Activated B cell treated with CpG ODN at 0.5 μM for 24 hours (primary cell): ENCODE measurements at regions of chr11 and their contacts with region 1.

Region 1: DNA sequence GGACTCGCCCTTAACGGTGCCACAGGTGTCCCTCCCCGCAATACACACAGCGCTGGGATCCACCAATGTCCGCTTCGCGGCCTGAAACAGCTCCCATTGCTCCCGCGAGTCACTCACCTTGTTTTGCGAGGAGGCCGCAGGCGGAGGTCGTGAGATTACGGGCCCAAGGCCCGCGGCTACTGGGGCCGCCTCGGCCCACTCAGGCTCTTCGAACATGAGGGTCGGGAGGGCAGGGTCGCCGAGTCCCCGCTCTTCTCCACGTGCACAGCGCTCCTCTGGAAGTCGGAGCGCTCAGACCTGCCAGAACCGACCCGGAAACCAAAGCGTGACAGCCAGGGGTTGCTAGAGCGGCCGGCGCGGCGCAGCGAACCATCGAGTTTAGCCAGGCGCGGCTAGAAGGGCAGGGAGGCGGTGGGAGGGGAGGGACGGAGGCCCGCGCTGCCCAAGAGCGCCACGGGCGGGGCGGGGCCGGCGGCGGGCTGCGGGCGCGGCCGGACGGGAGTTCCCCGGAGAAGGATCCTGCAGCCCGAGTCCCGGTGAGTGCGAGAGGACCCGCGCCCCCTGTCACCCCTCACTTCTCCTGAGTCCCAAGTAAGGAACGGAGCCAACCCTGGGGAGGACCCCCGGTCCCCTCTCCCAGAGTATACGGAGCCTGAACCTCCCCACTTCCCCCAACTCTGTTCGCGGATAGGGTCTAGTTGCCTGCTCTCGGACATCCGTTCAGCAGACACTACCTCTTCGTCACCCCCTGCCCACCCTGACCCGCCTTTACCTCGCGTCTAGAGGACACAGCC is at the starts of genes ILK and RRP8:
- DNase-seq: peak; percentile 78
- ATAC-seq: peak; percentile 88
- H3K4me3 Mint-ChIP-seq: no peak within 1 kb of the TSS
- H3K27ac Mint-ChIP-seq: no peak within 1 kb of the TSS
- H3K4me1 Mint-ChIP-seq: peaks cover 10% of the 10 kb centered on the region
- H3K27me3 Mint-ChIP-seq: no peaks in the 10 kb centered on the region
- CTCF ChIP-seq: no peak
- total RNA-seq, gene ILK: 113 and 128 TPM in 2 replicates
- total RNA-seq, gene RRP8: 29.1 and 30.5 TPM in 2 replicates

Region 2: GRCh38 chr11:6234387-6235107 is 368.9 kb before region 1 on chr11 and contains the start of gene FHIP1B:
- CTCF ChIA-PET with region 1: no interaction called
- POLR2A ChIA-PET with region 1: no interaction called
- intact Hi-C with region 1: loop called (anchors 1 kb)
- DNase-seq: peak; percentile 95
- ATAC-seq: peak; percentile 93
- H3K4me3 Mint-ChIP-seq: peak within 1 kb of the TSS; percentile 99
- H3K27ac Mint-ChIP-seq: peak within 1 kb of the TSS; percentile 92
- H3K4me1 Mint-ChIP-seq: peaks cover 32% of the 10 kb centered on the region
- H3K27me3 Mint-ChIP-seq: peaks cover 3% of the 10 kb centered on the region
- CTCF ChIP-seq: no peak
- total RNA-seq, gene FHIP1B: 27.7 and 32.8 TPM in 2 replicates

Region 3: DNA sequence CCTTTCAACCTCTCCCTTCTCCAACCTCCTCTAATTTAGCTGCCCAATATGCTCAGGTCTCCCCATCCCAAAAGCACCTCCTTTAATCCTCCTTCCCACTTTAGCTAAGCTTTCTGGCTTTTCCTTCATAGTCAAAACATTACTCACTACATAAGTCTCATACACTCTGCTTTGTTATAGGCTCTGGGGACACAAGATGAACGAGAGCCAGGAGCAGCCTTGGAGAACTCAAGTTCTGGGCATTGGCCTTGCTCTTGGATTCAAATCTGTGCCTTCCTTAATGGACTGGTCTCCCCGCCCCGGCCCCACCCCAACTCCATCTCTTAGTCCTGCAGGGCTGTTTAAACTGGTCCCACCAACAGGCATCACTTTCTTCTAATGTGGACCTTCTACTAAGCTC is 151.3 kb before region 1 on chr11:
- CTCF ChIA-PET with region 1: no interaction called
- POLR2A ChIA-PET with region 1: no interaction called
- intact Hi-C with region 1: no loop called
- DNase-seq: no peak
- ATAC-seq: no peak
- H3K4me3 Mint-ChIP-seq: no peak overlapping the region
- H3K27ac Mint-ChIP-seq: no peak overlapping the region
- H3K4me1 Mint-ChIP-seq: no peaks in the 10 kb centered on the region
- H3K27me3 Mint-ChIP-seq: no peaks in the 10 kb centered on the region
- CTCF ChIP-seq: no peak

Region 4: GRCh38 chr11:6531267-6531752 is 72.2 kb before region 1 on chr11:
- CTCF ChIA-PET with region 1: interaction called, 4 read pairs
- POLR2A ChIA-PET with region 1: interaction called, 5 read pairs
- intact Hi-C with region 1: loop called (anchors 5 kb)
- DNase-seq: no peak
- ATAC-seq: peak; percentile 60
- H3K4me3 Mint-ChIP-seq: no peak overlapping the region
- H3K27ac Mint-ChIP-seq: no peak overlapping the region
- H3K4me1 Mint-ChIP-seq: peaks cover 6% of the 10 kb centered on the region
- H3K27me3 Mint-ChIP-seq: no peaks in the 10 kb centered on the region
- CTCF ChIP-seq: peak; percentile 35

Region 5: DNA sequence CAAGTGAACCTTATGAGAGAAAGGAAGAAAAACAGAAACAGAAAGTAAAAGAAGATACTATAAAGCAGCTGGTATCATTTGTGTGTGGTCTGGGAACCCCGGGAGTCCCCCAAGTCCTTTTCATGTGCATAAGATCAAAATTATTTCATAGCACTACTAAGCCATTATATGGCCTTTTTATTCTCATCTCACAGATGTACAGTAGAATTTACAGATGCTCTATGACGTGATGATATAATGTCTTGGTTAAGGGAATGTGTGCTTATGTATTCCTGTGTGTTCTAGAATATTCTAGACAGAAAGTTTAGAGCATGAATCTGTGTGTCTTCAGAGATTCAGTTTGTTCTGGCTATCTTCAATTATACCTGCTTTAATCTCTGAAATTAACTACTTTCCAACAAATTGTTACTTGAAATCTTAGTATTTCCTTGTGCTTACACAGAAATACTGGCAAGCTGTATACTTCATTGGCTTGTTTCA is 24.3 kb after region 1 on chr11:
- CTCF ChIA-PET with region 1: no interaction called
- POLR2A ChIA-PET with region 1: no interaction called
- intact Hi-C with region 1: loop called (anchors 2 kb)
- DNase-seq: no peak
- ATAC-seq: peak; percentile 67
- H3K4me3 Mint-ChIP-seq: no peak overlapping the region
- H3K27ac Mint-ChIP-seq: peak overlapping the region; percentile 24
- H3K4me1 Mint-ChIP-seq: peaks cover 20% of the 10 kb centered on the region
- H3K27me3 Mint-ChIP-seq: no peaks in the 10 kb centered on the region
- CTCF ChIP-seq: no peak

Region 6: GRCh38 chr11:6705905-6706535 is 102.5 kb after region 1 on chr11:
- CTCF ChIA-PET with region 1: interaction called, 4 read pairs
- POLR2A ChIA-PET with region 1: no interaction called
- intact Hi-C with region 1: loop called (anchors 1 kb)
- DNase-seq: no peak
- ATAC-seq: peak; percentile 66
- H3K4me3 Mint-ChIP-seq: no peak overlapping the region
- H3K27ac Mint-ChIP-seq: peak overlapping the region; percentile 60
- H3K4me1 Mint-ChIP-seq: peaks cover 19% of the 10 kb centered on the region
- H3K27me3 Mint-ChIP-seq: no peaks in the 10 kb centered on the region
- CTCF ChIP-seq: peak; percentile 92